Calu3 (cell line): ENCODE measurements at regions of chr4 and their contacts with region 1.

Region 1: DNA sequence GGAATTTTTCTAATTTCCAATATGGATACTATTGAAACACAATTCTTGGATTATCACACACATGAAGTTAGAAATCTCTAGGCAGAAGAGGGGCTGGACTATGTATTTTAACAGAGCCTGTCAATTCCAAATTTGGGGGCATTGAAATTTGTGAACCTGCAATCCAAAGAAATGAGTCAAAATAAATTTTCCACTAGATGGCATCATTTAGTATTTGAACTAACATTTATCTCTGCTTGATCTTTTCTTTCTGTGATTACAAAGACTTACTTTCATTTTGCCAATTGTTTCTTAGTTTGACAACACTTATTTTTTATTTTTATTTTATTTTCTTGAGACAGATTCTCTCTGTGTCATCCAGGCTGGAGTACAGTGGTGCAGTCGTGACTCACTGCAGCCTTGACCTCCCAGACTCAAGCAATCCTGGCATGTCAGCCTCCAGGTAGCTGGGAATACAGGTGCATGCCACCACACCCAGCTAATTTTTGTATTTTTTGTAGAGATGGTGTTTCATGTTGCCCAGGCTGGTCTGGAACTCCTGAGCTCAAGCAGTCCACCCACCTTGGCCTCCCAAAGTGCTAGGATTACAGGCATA is 2.7 kb upstream of the PYURF start:
- DNase-seq: peak; percentile 2
- H3K4me3 Mint-ChIP-seq: no peak overlapping the region
- H3K27ac Mint-ChIP-seq: no peak overlapping the region
- H3K4me1 Mint-ChIP-seq: peaks cover 9% of the 10 kb centered on the region
- H3K27me3 Mint-ChIP-seq: no peaks in the 10 kb centered on the region
- CTCF ChIP-seq: no peak

Region 2: GRCh38 chr4:88803600-88804096 is 277.3 kb after region 1 on chr4:
- CTCF ChIA-PET with region 1: no interaction called
- intact Hi-C with region 1: loop called (anchors 5 kb)
- DNase-seq: peak; percentile 22
- H3K4me3 Mint-ChIP-seq: no peak overlapping the region
- H3K27ac Mint-ChIP-seq: no peak overlapping the region
- H3K4me1 Mint-ChIP-seq: peaks cover 40% of the 10 kb centered on the region
- H3K27me3 Mint-ChIP-seq: no peaks in the 10 kb centered on the region
- CTCF ChIP-seq: no peak

Region 3: GRCh38 chr4:88823058-88823919 is 297.0 kb after region 1 on chr4:
- CTCF ChIA-PET with region 1: no interaction called
- intact Hi-C with region 1: loop called (anchors 5 kb)
- DNase-seq: peak; percentile 67
- H3K4me3 Mint-ChIP-seq: peak overlapping the region; percentile 80
- H3K27ac Mint-ChIP-seq: peak overlapping the region; percentile 93
- H3K4me1 Mint-ChIP-seq: peaks cover 8% of the 10 kb centered on the region
- H3K27me3 Mint-ChIP-seq: no peaks in the 10 kb centered on the region
- CTCF ChIP-seq: no peak

Region 4: GRCh38 chr4:89110986-89111832 is 584.9 kb after region 1 on chr4 and contains the start of gene TIGD2:
- CTCF ChIA-PET with region 1: no interaction called
- intact Hi-C with region 1: no loop called
- DNase-seq: peak; percentile 86
- H3K4me3 Mint-ChIP-seq: peak within 1 kb of the TSS; percentile 93
- H3K27ac Mint-ChIP-seq: peak within 1 kb of the TSS; percentile 77
- H3K4me1 Mint-ChIP-seq: peaks cover 26% of the 10 kb centered on the region
- H3K27me3 Mint-ChIP-seq: no peaks in the 10 kb centered on the region
- CTCF ChIP-seq: peak; percentile 60
- total RNA-seq, gene TIGD2: 9.8 and 11.4 TPM in 2 replicates